Colonic mucosa (tissue), 4 donors: ENCODE measurements at regions of chr4 and their contacts with region 1.

Region 1: DNA sequence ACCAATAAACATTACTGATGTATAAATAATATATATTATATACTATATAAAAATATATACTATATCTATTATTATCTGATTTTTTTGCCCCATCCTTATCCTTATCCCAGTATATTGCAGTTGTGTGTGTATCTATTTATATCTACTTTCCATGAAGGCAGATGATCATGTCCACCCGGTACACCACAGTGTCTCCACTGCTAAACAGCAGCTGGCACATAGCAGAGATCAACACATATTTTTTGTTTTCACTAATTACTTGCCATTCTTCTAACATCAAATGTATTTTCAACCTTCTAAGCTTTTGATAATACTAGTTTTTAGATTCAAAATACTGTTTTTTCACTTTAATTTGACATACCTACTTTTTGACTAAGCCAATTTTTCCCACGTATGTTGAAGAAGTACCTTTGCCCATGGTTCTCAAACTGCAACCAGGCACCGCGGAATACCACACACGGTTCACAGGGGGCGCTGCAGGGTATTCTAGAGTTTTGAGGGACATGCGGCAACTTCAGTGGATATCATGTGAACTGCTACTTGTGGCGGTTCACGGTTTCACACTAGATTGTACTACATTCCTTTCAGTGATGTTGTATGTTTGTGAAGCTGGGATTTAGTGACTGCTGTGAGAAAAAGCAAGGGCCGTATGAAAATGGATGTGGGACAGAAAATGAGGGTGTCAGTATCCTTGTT is 182.5 kb upstream of the NPY2R start:
- DNase-seq: peak; percentile 66
- H3K4me3 ChIP-seq: no peak overlapping the region
- H3K27ac ChIP-seq: no peak overlapping the region
- H3K4me1 ChIP-seq: no peaks in the 10 kb centered on the region
- H3K27me3 ChIP-seq: no peaks in the 10 kb centered on the region
- CTCF ChIP-seq: peak; percentile 49

Region 2: DNA sequence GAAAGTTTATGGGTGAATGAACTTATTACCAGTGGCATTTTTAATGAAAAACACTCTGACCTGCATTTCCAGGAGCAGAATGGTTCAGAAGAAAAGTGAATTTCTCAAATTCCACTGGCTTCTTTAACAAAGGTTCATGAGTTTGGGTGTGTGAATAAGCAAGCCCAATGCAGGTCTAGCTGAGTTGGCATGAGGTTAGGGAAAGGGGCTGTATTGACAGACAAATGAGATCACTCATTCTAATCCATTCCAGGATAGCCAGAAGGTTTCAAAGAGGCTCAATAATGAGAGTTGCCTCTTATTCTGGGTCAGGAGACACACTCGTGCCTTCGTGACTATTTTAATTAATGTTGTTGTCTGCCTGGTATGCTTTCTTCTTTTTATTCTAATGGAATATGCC is 138.8 kb after region 1 on chr4:
- intact Hi-C with region 1: loop called (anchors 5 kb)
- DNase-seq: no peak
- H3K4me3 ChIP-seq: no peak overlapping the region
- H3K27ac ChIP-seq: no peak overlapping the region
- H3K4me1 ChIP-seq: no peaks in the 10 kb centered on the region
- H3K27me3 ChIP-seq: no peaks in the 10 kb centered on the region
- CTCF ChIP-seq: no peak

Region 3: GRCh38 chr4:155367608-155368007 is 341.7 kb after region 1 on chr4:
- intact Hi-C with region 1: loop called (anchors 10 kb)
- DNase-seq: no peak
- H3K4me3 ChIP-seq: no peak overlapping the region
- H3K27ac ChIP-seq: no peak overlapping the region
- H3K4me1 ChIP-seq: no peaks in the 10 kb centered on the region
- H3K27me3 ChIP-seq: no peaks in the 10 kb centered on the region
- CTCF ChIP-seq: no peak

Region 4: DNA sequence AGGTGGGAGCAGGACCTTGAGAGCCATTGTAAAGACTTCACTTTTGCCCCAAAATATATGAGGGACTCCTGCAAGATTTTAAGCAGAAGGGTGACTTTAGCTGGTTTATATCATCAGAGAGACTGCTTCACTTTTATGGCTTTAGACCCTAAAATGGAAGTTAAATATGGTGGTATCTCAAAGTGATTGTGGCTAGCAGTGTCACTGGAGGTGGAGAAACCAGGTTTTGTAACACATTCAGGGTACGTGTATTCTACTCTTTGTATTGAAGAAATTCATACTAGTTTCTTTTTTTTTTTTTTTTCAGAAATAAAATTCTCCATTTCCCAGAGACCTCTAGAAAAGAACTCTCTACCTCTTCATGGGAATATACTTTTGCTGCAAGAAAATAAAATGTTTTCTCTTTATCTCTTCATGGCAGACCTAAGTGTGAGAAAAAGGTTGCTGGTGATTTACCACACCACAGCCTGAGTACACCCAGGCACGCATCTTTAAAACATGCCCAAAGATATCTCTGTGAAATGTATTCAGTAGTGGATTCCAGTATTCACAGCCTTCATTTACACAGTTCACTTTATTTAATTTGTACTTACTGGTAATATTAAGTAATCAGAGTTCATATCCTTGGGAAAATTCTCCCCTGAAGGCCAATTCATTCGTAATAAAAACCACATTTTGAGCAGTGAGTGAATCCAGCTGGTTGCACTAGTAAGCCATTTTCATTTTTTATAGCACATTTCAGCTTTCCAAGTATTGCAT is 566.4 kb after region 1 on chr4:
- intact Hi-C with region 1: no loop called
- DNase-seq: no peak
- H3K4me3 ChIP-seq: no peak overlapping the region
- H3K27ac ChIP-seq: no peak overlapping the region
- H3K4me1 ChIP-seq: no peaks in the 10 kb centered on the region
- H3K27me3 ChIP-seq: no peaks in the 10 kb centered on the region
- CTCF ChIP-seq: no peak